MCF 10A (cell line): ENCODE measurements at regions of chr1 and their contacts with region 1.

Region 1: DNA sequence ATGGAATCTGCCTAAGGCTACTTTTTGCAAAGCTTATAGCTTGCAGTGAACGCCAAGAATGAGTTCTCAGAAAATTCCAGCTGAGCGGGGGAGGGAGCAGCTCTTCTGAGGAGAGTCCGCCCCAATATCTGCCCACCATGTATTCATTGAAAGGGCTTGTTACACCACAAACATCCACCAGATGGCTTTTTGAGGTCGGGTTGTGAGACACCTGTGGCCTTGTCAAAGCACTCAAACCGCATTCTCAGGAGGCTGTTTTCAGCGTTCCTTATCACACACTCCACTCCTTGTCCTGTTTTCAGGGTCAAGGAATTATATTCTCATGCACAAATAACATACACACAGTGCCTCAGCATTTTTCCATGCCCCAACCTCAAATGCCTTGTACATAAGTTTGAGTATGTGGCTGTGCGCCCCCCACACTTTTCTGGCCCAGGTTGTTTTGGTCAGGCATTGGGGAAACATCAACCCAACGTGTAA is 3.9 kb upstream of the C4BPB start:
- DNase-seq: peak; percentile 90
- H3K4me3 Mint-ChIP-seq: no peak overlapping the region
- H3K27ac Mint-ChIP-seq: no peak overlapping the region
- H3K4me1 Mint-ChIP-seq: peaks cover 6% of the 10 kb centered on the region
- H3K27me3 Mint-ChIP-seq: peaks cover 21% of the 10 kb centered on the region
- CTCF ChIP-seq: peak; percentile 92

Region 2: DNA sequence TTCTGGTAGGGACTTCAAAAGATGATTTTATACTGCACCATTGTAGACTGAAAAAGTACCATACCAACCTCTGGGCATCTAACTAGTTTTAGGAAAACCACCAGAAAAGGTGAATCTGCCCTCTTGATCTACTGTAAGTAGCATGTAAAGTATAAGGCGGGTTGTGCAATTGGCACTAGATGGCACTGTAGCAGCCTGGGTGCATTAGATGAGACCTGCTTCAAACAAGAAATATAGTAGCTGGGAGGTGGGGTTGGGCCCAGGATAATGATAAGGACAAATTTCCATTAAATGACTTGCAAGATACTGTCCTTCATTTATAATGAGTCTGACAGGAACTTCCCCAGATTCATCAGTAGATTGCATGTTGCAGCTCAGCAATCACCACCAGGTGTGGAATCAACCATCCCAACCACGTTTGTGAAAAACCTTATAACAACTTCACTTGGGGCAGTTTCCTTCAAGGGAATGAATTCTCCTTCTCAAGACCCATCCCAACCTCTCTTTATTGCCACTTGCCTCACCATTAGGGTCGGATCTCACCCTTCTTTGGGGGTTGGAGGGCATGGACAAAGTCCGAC is 275.1 kb before region 1 on chr1:
- CTCF ChIA-PET with region 1: no interaction called
- POLR2A ChIA-PET with region 1: no interaction called
- intact Hi-C with region 1: no loop called
- DNase-seq: peak; percentile 79
- H3K4me3 Mint-ChIP-seq: no peak overlapping the region
- H3K27ac Mint-ChIP-seq: no peak overlapping the region
- H3K4me1 Mint-ChIP-seq: no peaks in the 10 kb centered on the region
- H3K27me3 Mint-ChIP-seq: peaks cover 41% of the 10 kb centered on the region
- CTCF ChIP-seq: peak; percentile 84

Region 3: DNA sequence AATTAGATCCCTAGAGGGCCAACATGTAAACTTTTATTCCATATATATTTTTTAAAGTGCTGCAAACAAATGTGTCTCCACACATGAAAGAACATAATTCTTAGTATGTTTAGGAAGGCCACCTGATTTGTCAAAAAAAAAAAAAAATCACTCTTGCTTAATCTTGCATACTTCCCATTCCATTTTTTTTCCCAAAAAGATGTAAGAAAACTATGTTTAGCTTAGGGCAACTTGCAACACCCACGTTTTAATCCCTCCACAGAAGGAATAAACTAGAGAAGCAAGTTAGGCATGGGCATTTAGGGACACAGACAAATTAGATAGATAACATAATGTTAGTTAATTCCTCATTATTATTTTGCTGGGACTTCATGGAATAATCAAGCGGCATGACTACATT is 39.3 kb before region 1 on chr1:
- CTCF ChIA-PET with region 1: interaction called, 20 read pairs
- POLR2A ChIA-PET with region 1: interaction called, 23 read pairs
- intact Hi-C with region 1: no loop called
- DNase-seq: no peak
- H3K4me3 Mint-ChIP-seq: peak overlapping the region; percentile 37
- H3K27ac Mint-ChIP-seq: peak overlapping the region; percentile 95
- H3K4me1 Mint-ChIP-seq: peaks cover 44% of the 10 kb centered on the region
- H3K27me3 Mint-ChIP-seq: no peaks in the 10 kb centered on the region
- CTCF ChIP-seq: no peak

Region 4: GRCh38 chr1:207103892-207104373 is 19.2 kb after region 1 on chr1 and contains the start of gene C4BPA:
- CTCF ChIA-PET with region 1: interaction called, 11 read pairs
- POLR2A ChIA-PET with region 1: no interaction called
- intact Hi-C with region 1: no loop called
- DNase-seq: peak; percentile 40
- H3K4me3 Mint-ChIP-seq: no peak within 1 kb of the TSS
- H3K27ac Mint-ChIP-seq: no peak within 1 kb of the TSS
- H3K4me1 Mint-ChIP-seq: no peaks in the 10 kb centered on the region
- H3K27me3 Mint-ChIP-seq: peaks cover 44% of the 10 kb centered on the region
- CTCF ChIP-seq: no peak
- total RNA-seq, gene C4BPA: not detected in 2 replicates

Region 5: DNA sequence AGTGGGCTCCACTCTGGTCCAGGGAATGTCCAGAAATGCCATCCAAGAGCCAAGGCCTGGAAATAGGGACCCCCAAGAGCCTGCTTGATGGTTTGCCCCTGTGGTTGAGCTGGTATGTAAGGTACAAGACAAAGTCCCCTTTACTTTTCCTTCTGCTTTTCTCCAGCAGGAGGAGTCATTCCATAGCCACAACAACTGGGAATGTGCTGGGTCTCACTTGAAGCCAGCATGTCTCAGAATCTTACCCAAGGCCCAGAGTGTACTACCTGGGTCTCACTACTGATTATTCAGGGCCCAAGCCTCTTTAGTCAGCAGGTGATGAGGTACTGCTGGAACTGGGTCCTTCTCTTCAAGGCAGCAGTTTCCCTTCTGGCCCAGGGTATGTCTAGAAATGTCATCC is 174.7 kb after region 1 on chr1:
- CTCF ChIA-PET with region 1: no interaction called
- POLR2A ChIA-PET with region 1: no interaction called
- intact Hi-C with region 1: loop called (anchors 10 kb)
- DNase-seq: peak; percentile 77
- H3K4me3 Mint-ChIP-seq: no peak overlapping the region
- H3K27ac Mint-ChIP-seq: no peak overlapping the region
- H3K4me1 Mint-ChIP-seq: no peaks in the 10 kb centered on the region
- H3K27me3 Mint-ChIP-seq: no peaks in the 10 kb centered on the region
- CTCF ChIP-seq: peak; percentile 71

Region 6: DNA sequence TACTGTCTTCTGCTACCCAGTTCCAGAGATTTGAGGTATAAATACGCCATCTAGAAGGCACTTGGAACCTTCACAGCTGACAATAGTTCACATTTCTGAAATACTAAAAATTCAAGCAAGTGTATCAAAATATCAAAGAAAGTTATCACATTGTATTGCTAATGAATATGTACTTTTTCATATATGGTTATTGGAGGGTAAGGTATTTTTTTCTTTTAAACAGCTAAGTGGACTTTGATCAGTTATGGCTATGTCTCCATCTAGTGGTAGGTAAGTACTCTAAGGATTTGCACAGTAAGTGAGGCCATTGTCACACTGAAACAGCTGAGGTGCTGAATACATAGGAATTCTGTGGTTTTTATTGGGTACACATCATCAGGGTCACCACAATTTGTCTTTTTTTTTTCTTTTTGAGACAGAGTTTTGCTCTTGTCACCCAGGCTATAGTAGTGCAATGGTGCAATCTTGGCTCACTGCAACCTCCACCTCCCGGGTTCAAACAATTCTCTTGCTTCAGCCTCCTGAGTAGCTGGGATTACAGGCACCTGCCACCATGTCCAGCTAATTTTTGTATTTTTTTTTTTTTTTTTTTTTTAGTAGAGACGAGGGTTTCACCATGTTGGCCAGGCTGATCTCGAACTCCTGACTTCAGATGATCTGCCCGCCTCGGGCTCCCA is 320.2 kb after region 1 on chr1:
- CTCF ChIA-PET with region 1: interaction called, 221 read pairs
- POLR2A ChIA-PET with region 1: interaction called, 7 read pairs
- intact Hi-C with region 1: loop called (anchors 1 kb)
- DNase-seq: peak; percentile 83
- H3K4me3 Mint-ChIP-seq: no peak overlapping the region
- H3K27ac Mint-ChIP-seq: no peak overlapping the region
- H3K4me1 Mint-ChIP-seq: peaks cover 5% of the 10 kb centered on the region
- H3K27me3 Mint-ChIP-seq: no peaks in the 10 kb centered on the region
- CTCF ChIP-seq: peak; percentile 99

Region 7: DNA sequence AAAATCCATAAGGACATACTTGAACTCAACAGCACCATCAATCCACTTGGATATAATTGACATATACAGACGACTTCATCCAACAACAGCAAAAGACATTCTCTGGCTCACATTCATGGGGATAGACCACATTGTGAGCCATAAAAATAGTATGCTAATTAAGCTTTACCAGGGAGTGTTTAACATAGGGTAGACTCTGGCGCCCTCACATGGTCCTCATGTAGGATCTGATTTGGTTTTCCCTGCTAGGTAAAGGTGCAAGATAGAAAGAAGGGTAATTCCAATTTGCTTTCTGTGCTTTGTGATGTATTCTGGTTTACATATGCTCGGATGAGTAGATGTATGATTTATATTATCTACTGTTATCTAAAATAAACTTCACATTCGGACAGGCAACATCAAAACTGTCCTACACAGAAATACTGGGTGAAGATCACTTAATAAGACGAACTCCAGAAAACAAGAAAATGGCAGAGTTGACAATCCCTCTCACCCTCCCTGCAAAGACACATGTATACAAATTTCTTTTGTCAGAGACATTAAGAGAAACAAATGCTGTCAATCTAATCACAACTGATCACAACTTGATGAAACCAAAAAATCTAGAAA is 587.9 kb after region 1 on chr1:
- CTCF ChIA-PET with region 1: no interaction called
- POLR2A ChIA-PET with region 1: no interaction called
- intact Hi-C with region 1: loop called (anchors 10 kb)
- DNase-seq: peak; percentile 86
- H3K4me3 Mint-ChIP-seq: no peak overlapping the region
- H3K27ac Mint-ChIP-seq: no peak overlapping the region
- H3K4me1 Mint-ChIP-seq: peaks cover 12% of the 10 kb centered on the region
- H3K27me3 Mint-ChIP-seq: peaks cover 75% of the 10 kb centered on the region
- CTCF ChIP-seq: peak; percentile 90